ENCODE measurements at regions of chr10 and their contacts with region 1.

Region 1: DNA sequence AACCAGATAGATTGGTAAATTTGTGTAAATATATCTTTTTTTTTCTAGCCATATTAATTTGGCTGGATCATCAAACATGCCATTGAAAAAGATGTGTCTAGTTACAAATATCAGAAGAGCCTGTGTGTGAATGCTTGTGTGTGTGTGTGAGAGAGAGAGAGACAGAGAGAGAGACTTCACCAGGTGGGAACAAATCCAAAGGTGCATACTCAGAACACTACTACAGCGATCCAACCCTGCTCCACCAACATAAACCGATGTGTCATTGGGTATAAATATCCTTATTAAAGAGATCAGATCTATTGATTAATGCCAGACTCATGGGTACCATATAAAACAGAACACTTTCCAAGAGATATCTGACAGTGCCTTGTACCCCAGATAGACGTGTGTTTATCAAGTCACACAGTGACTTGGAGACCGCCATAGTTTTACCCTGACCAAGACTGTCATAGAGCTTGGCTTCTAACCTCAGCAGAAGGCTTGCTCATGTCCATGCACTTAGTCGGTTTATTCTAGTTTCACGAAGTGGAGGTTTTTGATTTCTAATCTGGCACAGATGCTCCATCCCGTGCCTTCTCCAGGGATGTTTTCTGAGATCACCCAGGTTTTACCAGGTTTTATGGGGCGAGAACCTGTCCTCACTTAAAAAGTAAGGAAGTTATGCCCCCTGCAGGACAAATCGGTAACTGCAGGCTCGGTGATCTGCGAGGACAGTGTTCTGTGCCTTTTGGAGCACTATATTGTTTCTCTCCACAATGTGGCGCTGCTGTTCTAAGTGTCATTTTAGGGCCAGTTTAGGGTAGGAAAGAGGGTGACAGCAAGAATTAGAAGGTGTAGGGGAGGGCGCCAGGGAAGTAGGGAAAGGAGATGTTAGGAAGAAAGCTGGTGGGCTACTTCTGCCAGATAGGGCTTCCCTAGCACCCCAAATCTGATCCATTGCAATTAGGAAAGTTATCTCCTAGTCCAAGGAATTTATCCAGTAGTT is 29.3 kb upstream of the WNT8B start:
- H3K4me3 Mint-ChIP-seq: no peak overlapping the region
- H3K27ac Mint-ChIP-seq: no peak overlapping the region
- H3K4me1 Mint-ChIP-seq: peaks cover 6% of the 10 kb centered on the region
- H3K27me3 Mint-ChIP-seq: peaks cover 8% of the 10 kb centered on the region

Region 2: GRCh38 chr10:100158044-100158808 is 275.3 kb before region 1 on chr10:
- intact Hi-C with region 1: no loop called
- H3K4me3 Mint-ChIP-seq: no peak overlapping the region
- H3K27ac Mint-ChIP-seq: peak overlapping the region; percentile 13
- H3K4me1 Mint-ChIP-seq: peaks cover 17% of the 10 kb centered on the region
- H3K27me3 Mint-ChIP-seq: no peaks in the 10 kb centered on the region

Region 3: DNA sequence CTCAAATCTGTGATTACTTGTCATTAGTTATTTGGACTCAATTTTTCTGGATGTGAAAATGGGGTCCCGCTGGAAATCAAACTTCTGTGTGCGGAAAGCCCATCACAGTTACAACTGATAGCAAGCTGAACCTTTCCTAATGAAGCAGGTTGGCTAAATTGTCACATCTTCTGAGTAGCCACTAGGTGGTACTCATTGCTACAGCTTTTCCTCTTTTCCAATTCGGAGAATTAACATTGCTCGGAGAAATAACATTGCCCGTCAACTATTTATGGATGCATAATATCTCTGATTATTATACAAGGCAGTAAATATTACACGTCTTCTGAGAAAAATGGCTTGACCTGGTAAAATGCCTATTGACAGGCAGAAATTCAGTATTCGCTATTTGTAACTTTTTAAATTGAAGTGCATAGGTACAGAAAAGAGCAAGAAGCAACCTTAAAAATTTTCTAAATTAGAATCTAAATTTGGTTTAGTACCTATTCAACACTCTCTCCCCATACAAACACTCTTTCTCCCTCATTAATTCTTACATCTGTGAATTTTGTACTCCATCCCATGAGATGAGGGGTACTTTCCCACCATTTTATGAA is 129.7 kb before region 1 on chr10:
- intact Hi-C with region 1: loop called (anchors 1 kb)
- H3K4me3 Mint-ChIP-seq: no peak overlapping the region
- H3K27ac Mint-ChIP-seq: no peak overlapping the region
- H3K4me1 Mint-ChIP-seq: no peaks in the 10 kb centered on the region
- H3K27me3 Mint-ChIP-seq: peaks cover 49% of the 10 kb centered on the region

Region 4: GRCh38 chr10:100338434-100339036 is 95.0 kb before region 1 on chr10:
- intact Hi-C with region 1: loop called (anchors 1 kb)
- H3K4me3 Mint-ChIP-seq: no peak overlapping the region
- H3K27ac Mint-ChIP-seq: peak overlapping the region; percentile 84
- H3K4me1 Mint-ChIP-seq: peaks cover 48% of the 10 kb centered on the region
- H3K27me3 Mint-ChIP-seq: peaks cover 14% of the 10 kb centered on the region

Region 5: GRCh38 chr10:100391163-100392002 is 42.2 kb before region 1 on chr10:
- intact Hi-C with region 1: no loop called
- H3K4me3 Mint-ChIP-seq: no peak overlapping the region
- H3K27ac Mint-ChIP-seq: no peak overlapping the region
- H3K4me1 Mint-ChIP-seq: peaks cover 18% of the 10 kb centered on the region
- H3K27me3 Mint-ChIP-seq: no peaks in the 10 kb centered on the region

Region 6: GRCh38 chr10:100481462-100482081 is 48.0 kb after region 1 on chr10:
- intact Hi-C with region 1: loop called (anchors 1 kb)
- H3K4me3 Mint-ChIP-seq: peak overlapping the region; percentile 70
- H3K27ac Mint-ChIP-seq: peak overlapping the region; percentile 55
- H3K4me1 Mint-ChIP-seq: peaks cover 25% of the 10 kb centered on the region
- H3K27me3 Mint-ChIP-seq: peaks cover 61% of the 10 kb centered on the region

Region 7: DNA sequence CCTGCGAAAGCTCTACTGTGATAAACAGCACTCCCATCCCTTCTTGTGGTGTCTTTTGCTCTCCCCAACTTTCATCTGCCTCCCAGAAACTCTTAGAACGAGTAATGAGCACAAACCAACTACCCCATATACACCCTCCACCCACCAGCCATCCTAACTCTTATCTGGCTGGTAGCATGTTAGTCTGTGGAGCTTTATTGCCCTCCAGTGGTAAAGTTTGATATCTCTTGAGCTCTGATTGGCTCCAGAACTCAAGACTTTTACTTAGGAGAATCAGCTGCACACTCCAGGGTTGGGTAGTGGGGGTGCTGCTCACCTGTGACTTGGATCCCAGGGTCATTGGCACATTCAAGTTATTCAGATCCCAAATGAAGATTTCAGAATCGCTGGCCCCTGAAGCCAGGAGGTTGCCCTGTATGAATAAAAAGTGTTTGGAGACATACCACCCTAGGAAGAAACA is 75.2 kb after region 1 on chr10:
- intact Hi-C with region 1: loop called (anchors 1 kb)
- H3K4me3 Mint-ChIP-seq: no peak overlapping the region
- H3K27ac Mint-ChIP-seq: no peak overlapping the region
- H3K4me1 Mint-ChIP-seq: peaks cover 9% of the 10 kb centered on the region
- H3K27me3 Mint-ChIP-seq: no peaks in the 10 kb centered on the region

Region 8: DNA sequence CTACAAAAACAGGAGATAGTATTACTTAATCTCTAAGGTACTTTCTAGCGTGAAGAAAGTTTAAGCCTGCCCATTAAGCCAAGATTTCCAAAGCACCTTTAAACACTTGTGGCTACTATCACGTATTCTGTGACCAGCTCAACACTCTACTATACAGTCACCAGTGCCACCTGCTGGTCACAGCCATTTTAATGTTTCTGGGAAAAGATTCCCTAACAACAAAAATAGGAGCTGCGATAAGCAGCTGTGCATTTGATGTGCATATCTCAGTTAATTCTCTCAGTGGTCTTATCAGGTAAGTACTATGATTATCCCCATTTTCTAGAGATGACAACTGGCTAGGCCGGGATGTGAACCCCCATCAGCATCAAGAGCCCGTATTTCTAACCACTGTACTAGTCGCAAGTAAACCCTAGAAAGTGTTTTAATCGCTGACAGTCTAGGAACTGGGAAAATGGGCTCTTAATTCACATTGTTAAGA is 85.3 kb after region 1 on chr10:
- intact Hi-C with region 1: loop called (anchors 1 kb)
- H3K4me3 Mint-ChIP-seq: no peak overlapping the region
- H3K27ac Mint-ChIP-seq: no peak overlapping the region
- H3K4me1 Mint-ChIP-seq: peaks cover 8% of the 10 kb centered on the region
- H3K27me3 Mint-ChIP-seq: peaks cover 21% of the 10 kb centered on the region

Region 9: DNA sequence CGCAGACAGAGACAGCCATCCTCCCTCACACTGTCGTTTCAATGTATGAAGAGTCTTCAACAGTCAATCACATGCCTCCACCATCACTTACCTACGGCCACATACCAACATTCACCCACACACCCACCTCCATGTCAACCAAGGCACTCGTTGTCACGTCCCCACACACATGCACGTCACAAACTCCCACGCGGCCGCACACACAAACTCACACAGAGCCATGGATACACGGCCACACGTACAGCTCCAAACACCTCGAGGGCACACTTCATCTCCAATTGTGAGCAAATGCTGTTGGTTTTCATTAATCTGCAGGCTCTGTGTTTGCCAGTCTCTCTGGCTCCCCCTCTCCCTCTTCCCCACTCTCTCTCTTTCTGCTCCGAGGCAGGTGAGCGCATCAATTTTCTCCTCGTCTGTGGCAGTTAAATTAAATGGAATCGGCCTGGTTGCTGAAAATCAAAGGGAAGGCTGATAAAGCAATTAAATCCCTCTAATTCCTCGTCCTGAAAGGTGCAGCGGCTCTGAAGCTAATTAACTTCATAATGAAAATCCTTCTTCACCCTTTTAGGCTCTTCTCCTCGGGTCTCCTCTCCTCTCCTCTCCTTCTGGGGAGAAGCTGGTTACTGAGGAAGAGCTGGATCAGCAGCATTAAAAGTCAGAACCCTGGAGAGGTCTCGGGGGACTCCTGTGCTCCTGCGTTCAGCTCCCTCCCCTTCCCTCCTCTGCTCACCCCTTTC is 425.4 kb after region 1 on chr10:
- intact Hi-C with region 1: no loop called
- H3K4me3 Mint-ChIP-seq: no peak overlapping the region
- H3K27ac Mint-ChIP-seq: no peak overlapping the region
- H3K4me1 Mint-ChIP-seq: no peaks in the 10 kb centered on the region
- H3K27me3 Mint-ChIP-seq: peaks cover 55% of the 10 kb centered on the region